PC-9 (cell line): ENCODE measurements at regions of chr6 and their contacts with region 1.

Region 1: DNA sequence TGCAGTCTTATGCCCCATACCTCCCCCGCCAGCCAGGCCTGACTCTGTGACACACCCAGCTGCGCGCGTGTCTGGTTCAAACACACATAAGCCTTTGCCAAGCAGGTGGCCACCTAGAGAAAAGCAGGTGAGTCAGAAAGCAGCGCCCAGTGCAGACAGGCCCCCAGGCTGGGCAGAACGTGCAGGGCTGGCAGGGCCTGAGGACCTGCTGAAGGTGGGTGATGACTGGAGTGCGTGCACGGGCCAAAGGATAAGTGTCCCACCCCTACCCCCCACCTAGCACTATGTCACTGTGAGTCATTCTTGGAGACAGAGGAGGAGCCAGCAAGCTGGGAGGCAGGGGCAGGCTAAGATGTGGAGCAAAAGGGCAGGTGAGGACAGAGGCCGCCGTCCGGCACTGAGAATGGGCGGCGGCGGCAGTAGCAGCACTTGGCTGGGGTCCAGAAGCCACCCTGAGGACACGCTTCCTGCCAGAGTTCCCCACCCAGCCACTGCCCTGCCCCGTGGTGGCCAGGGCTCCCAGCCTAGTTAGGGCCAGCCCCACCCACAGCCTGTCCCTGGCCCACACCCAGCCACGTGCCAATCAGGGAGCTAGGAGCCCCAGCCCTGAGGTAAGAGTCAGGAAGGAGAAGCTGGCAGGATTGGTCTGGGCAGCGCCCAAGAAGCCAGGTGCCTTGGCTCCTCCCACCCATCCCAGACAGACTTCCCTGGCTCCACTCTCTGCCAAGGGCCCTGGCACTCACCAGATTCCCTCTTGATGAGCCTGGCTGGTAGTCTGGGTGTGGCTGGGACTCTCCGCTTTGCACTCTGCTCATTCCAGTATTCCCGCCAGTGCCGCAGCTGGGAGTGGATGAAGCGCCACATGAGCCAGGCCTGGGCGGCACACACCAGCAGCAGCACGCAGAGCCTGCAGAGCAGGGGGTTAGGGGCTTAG is 72.7 kb downstream of the TRAM2 start:
- DNase-seq: peak; percentile 98 to 99
- H3K4me3 ChIP-seq: peak overlapping the region; percentile 12; the same call in 1 of the 2 replicates
- H3K27ac ChIP-seq: peak overlapping the region; percentile 36
- H3K4me1 ChIP-seq: peaks cover 37% of the 10 kb centered on the region
- H3K27me3 ChIP-seq: no peaks in the 10 kb centered on the region
- CTCF ChIP-seq: no peak

Region 2: GRCh38 chr6:51578994-51579393 is 925.1 kb before region 1 on chr6:
- CTCF ChIA-PET with region 1: no interaction called
- POLR2A ChIA-PET with region 1: no interaction called
- intact Hi-C with region 1: no loop called
- DNase-seq: no peak
- H3K4me3 ChIP-seq: no peak overlapping the region
- H3K27ac ChIP-seq: no peak overlapping the region
- H3K4me1 ChIP-seq: no peaks in the 10 kb centered on the region
- H3K27me3 ChIP-seq: no peaks in the 10 kb centered on the region
- CTCF ChIP-seq: no peak

Region 3: DNA sequence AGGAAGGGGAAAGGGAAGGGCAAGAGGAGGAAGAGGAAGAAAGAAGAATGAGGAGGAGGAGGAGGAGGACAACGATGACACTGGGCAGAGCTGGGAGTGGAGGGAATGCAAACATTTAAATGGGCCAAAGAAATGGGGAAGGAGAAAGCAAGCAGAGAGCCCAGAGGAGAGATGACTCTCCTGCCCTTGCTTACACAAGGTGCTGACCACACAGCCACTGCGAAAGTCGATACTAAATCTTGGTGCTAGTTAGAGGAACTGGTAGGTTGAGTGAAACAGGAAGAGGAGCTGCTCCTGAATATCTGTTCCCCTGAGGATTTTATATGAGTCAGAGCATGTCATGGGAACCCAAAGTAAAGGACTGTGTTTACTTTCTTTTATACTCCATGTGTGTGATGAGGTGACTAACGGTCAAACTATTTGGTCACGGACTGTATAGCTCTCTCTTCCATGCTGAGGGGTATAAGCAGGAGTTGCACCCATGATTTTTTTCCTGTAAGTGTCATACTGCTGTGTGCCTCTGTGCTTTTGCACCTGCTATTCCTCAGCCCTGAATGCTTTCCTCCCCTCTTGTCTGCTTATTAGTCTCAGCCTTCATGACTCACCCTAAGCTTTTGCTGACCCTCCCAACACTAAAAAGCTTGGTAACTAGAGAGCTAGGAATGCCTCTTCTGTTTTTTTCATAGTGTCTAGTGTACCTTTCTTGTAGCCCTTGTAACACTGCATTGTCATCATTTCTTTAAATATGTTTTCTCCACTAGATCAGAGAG is 151.7 kb before region 1 on chr6:
- CTCF ChIA-PET with region 1: no interaction called
- POLR2A ChIA-PET with region 1: no interaction called
- intact Hi-C with region 1: loop called (anchors 1 kb)
- DNase-seq: peak; percentile 75 to 100
- H3K4me3 ChIP-seq: peak overlapping the region; percentile 8; the same call in 1 of the 2 replicates
- H3K27ac ChIP-seq: peak overlapping the region; percentile 97
- H3K4me1 ChIP-seq: peaks cover 30% of the 10 kb centered on the region
- H3K27me3 ChIP-seq: no peaks in the 10 kb centered on the region
- CTCF ChIP-seq: no peak

Region 4: DNA sequence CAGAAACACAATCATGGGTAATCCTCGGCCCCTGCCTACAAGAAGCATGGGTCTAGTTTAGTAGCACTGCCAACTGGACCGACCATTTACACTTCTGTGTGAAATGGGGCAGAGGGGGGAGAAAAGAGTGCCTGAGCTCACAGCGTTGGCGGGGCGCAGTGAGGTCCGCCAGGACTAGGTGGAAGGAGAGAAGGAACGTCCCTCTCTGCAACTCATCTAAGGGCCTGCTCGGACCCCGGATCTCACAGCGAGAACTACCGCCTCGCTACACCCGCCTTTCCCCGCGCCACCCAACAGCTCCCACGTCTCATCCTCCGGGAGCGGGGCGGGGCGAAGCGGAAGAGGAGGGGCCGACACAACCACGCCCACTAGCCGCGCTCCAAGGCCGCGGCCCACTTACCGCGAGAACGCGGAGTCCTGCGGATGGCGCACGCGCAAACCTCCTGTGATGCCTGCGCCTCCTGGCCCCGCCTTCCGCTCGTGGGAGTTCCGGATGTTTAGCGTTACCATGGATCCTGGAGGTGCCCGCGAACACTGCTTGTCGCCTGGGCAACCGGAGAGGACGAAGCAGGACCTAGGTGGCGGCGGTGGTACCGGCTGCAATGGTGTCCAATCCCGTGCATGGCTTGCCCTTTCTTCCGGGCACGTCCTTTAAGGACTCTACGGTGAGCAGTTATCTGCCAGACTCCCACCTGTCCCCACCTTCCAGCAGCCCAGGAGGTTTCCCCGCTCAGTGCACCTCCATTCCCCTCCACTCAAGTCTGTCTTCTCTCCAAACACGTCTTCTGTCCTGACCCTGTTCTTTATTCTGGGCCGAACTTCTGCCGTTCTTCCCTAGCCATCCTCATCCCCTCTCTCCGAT is 84.1 kb before region 1 on chr6 and contains the start of gene EFHC1:
- CTCF ChIA-PET with region 1: no interaction called
- POLR2A ChIA-PET with region 1: interaction called, 6 read pairs
- intact Hi-C with region 1: loop called (anchors 1 kb)
- DNase-seq: peak; percentile 91 to 98
- H3K4me3 ChIP-seq: peak within 1 kb of the TSS; percentile 75
- H3K27ac ChIP-seq: peak within 1 kb of the TSS; percentile 56
- H3K4me1 ChIP-seq: peaks cover 59% of the 10 kb centered on the region
- H3K27me3 ChIP-seq: no peaks in the 10 kb centered on the region
- CTCF ChIP-seq: no peak
- total RNA-seq, gene EFHC1: 35.8 and 45.0 TPM in 2 replicates

Region 5: DNA sequence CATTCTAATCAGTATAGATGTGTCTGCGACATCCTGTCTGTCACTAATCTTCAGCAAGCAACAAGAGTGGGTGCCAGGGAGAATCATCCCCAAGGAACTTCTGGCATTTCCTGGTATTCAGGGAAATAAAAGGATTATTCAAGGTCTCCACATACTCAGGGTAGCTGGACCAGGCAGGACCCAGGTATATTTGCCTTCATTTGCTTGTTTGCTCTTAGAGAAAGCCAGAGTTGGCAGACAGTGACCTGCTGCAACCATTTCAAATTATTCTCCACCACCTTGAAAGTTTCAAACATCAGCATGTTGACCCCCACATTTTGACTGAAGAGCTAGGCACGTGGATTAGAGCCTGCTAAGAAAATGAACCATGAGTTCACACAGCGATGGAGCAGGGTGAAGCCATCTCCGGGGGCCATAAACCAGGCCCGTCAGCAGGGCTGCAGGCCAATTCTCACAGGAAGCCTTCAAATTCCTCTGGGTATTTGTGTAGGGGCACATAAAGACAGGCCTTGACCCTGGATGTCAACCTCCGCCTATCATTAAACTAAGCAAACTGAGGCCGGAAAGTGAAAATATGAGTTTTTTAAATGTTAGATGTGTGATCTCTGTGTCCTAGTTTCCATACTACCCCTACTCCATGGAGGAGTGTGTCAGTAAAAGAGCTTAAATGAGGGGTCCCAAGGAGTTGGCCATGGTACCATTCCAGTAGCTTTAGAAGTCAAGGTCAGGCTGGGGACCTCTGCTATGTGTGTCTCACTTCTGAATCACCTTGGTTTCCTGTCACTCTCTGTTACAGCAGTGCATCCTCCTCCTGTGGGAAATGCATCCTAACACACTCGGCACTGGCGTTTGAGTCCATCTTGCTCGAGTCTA is 39.9 kb after region 1 on chr6:
- CTCF ChIA-PET with region 1: no interaction called
- POLR2A ChIA-PET with region 1: no interaction called
- intact Hi-C with region 1: loop called (anchors 1 kb)
- DNase-seq: peak in 1 of 2 experiments; percentile 21
- H3K4me3 ChIP-seq: no peak overlapping the region
- H3K27ac ChIP-seq: no peak overlapping the region
- H3K4me1 ChIP-seq: peaks cover 10% of the 10 kb centered on the region; the same call in 1 of the 2 replicates
- H3K27me3 ChIP-seq: no peaks in the 10 kb centered on the region
- CTCF ChIP-seq: no peak

Region 6: DNA sequence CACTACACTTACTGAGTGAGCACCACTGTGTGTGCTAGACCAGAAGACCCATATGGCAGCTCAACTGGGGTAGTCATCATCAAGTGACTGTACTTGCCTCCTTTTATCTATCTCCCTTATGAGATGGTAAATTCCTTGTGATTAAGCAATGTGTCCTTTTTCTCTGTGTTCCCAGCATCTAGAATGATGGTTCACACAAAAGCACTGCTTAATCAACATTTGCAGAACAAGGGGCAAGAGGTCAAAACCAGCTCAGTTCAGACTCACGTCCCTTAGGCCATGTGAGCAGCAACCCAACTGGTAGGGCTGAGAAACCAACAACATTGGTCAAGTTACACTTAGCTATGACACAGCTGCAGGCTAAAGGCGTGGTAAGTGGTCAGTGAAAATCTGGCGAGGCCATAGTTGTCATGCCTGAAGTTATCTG is 62.8 kb after region 1 on chr6:
- CTCF ChIA-PET with region 1: interaction called, 4 read pairs
- POLR2A ChIA-PET with region 1: interaction called, 3 read pairs
- intact Hi-C with region 1: loop called (anchors 1 kb)
- DNase-seq: peak; percentile 76 to 98
- H3K4me3 ChIP-seq: no peak overlapping the region
- H3K27ac ChIP-seq: peak overlapping the region; percentile 65
- H3K4me1 ChIP-seq: peaks cover 32% of the 10 kb centered on the region
- H3K27me3 ChIP-seq: no peaks in the 10 kb centered on the region
- CTCF ChIP-seq: no peak

Region 7: GRCh38 chr6:52577022-52577777 is 73.1 kb after region 1 on chr6 and contains the start of gene TRAM2:
- CTCF ChIA-PET with region 1: no interaction called
- POLR2A ChIA-PET with region 1: no interaction called
- intact Hi-C with region 1: loop called (anchors 1 kb)
- DNase-seq: peak; percentile 48 to 86
- H3K4me3 ChIP-seq: peak within 1 kb of the TSS; percentile 67
- H3K27ac ChIP-seq: peak within 1 kb of the TSS; percentile 83
- H3K4me1 ChIP-seq: peaks cover 34% of the 10 kb centered on the region
- H3K27me3 ChIP-seq: no peaks in the 10 kb centered on the region
- CTCF ChIP-seq: no peak
- total RNA-seq, gene TRAM2: 28.1 and 40.9 TPM in 2 replicates

Region 8: GRCh38 chr6:52595000-52595795 is 91.1 kb after region 1 on chr6:
- CTCF ChIA-PET with region 1: no interaction called
- POLR2A ChIA-PET with region 1: no interaction called
- intact Hi-C with region 1: loop called (anchors 1 kb)
- DNase-seq: no peak
- H3K4me3 ChIP-seq: no peak overlapping the region
- H3K27ac ChIP-seq: no peak overlapping the region
- H3K4me1 ChIP-seq: peaks cover 11% of the 10 kb centered on the region
- H3K27me3 ChIP-seq: no peaks in the 10 kb centered on the region
- CTCF ChIP-seq: no peak